ENCODE measurements at regions of chr10 and their contacts with region 1.

Region 1: DNA sequence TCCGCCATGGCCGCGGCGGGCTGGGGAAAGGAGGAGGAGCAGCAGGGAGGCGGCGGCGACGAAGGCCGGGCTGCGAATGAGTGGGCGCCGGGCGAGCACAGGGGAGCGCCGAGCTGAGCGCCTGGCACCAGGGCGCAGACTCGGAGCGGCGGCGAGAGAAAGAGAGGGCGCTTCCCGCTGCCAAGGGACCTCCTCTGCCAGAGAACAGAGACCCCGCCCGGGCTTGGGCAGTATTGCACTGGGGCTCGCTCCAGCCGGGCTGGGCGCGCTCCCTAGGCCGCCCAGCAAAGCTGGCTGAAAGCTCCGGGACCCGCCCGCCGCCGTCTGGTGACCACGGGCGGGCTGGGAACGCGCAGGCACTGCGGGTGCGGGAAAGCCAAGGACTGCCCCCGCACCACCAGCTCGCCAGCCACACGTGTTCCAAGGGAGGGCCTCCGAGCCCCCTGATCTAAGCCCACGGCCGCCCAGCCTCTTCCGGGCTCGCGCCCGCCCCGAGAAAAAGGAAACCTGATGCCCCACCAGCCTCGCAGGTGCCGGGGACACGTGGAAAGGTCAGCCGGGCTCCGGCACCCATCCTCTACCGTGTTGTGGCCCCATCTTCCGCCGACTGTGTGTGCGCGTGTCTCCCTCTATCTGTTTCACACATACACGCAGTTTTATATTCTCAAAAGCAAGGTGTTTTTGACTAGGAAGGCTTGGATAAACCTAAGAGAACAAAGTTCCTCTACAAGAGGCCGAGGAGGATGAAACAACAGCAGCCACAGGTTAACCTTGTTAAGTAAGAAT is at the start of gene CCDC6:
- DNase-seq: peak; percentile 92
- total RNA-seq, gene CCDC6: 28.1 and 43.5 TPM in 2 replicates

Region 2: GRCh38 chr10:59823111-59823510 is 83.5 kb before region 1 on chr10:
- in situ Hi-C with region 1: loop called (anchors 5 kb)
- DNase-seq: peak; percentile 53

Region 3: GRCh38 chr10:60003651-60004523 is 97.3 kb after region 1 on chr10:
- in situ Hi-C with region 1: no loop called
- DNase-seq: no peak